Activated CD4-positive, alpha-beta T cell treated with anti-CD3 and anti-CD28 coated beads for 36 hours (primary cell): ENCODE measurements at regions of chr1 and their contacts with region 1.

Region 1: DNA sequence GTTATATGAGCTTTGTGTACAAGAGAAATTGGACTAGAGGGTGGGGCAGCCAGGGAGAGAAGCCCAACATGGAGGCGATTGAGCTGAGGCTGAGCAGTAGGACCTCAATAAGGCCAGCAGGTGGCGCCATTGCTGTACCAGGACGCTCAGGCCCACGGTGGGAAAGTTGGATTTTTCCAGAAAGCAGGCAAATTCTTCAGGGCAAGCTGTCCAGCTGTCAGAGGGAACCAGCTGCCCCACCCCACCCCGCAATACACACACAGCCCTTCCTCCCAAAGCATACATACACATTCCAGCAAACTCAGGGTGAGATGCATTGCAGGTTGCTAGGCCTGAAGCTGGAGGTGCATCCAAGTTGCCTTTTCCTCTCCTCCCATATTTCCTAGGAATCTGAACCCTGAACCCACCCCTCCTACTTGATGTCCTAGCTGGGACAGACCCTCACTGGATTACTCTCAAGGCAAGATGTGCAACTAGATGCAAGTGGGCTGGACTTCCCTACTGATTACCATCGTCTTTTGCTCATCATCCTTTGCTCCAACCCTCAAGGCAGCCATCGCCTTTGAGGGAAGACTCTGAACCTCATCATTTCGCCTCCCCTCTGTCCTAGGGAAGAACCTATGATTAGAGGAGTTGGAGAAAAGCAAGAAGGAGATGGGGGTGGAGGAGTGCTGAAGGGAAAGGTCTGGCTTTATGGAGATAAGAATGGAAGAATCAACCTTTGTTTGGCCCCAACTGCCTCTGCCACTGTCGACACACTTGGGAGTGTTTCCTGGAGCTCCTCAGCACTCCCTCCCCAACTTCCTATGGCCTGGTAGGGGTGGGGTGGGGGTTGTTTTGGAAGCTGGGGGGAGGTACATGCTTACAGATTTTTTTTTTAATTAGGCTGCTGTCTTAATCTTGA is 25.5 kb downstream of the CD34 start:
- DNase-seq: peak; percentile 85
- ATAC-seq: peak; percentile 62
- H3K4me3 Mint-ChIP-seq: no peak overlapping the region
- H3K27ac Mint-ChIP-seq: peak overlapping the region; percentile 97
- H3K4me1 Mint-ChIP-seq: peaks cover 35% of the 10 kb centered on the region
- H3K27me3 Mint-ChIP-seq: peaks cover 2% of the 10 kb centered on the region

Region 2: DNA sequence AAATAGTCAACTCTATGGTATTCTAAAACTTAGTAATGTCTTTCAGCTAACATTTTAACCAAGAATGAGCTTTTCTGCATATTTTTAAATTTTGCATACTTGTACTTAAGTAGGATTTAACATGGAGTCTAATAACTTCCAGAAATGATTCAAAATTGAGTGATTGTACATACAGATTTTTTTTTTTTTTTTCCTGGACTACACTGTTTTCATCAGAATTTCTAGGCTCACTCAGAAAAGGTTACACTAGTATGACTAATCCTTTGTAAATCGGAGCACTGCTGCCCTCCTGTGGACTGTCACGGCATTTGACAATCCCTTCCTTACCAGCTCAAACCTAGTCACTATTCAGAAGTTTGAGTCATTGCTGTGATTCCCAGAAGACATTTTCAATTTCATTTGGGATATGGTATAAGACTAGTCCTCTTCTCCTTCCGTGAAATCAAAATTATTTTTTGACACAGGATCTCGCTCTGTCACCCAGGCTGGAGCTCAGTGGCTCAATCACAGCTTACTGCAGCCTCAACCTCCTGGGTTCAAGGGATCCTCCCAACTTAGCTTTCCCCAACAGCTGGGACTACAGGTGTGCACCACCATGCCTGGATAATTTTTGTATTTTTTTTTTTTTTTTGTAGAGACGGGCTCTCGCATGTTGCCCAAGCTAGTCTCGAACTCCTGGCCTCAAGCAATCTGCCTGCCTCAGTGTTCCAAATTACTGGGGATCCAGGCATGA is 88.0 kb before region 1 on chr1:
- CTCF ChIA-PET with region 1: interaction called, 21 read pairs
- POLR2A ChIA-PET with region 1: interaction called, 5 read pairs
- intact Hi-C with region 1: no loop called
- DNase-seq: peak; percentile 90
- ATAC-seq: peak; percentile 91
- H3K4me3 Mint-ChIP-seq: no peak overlapping the region
- H3K27ac Mint-ChIP-seq: no peak overlapping the region
- H3K4me1 Mint-ChIP-seq: peaks cover 36% of the 10 kb centered on the region
- H3K27me3 Mint-ChIP-seq: no peaks in the 10 kb centered on the region

Region 3: DNA sequence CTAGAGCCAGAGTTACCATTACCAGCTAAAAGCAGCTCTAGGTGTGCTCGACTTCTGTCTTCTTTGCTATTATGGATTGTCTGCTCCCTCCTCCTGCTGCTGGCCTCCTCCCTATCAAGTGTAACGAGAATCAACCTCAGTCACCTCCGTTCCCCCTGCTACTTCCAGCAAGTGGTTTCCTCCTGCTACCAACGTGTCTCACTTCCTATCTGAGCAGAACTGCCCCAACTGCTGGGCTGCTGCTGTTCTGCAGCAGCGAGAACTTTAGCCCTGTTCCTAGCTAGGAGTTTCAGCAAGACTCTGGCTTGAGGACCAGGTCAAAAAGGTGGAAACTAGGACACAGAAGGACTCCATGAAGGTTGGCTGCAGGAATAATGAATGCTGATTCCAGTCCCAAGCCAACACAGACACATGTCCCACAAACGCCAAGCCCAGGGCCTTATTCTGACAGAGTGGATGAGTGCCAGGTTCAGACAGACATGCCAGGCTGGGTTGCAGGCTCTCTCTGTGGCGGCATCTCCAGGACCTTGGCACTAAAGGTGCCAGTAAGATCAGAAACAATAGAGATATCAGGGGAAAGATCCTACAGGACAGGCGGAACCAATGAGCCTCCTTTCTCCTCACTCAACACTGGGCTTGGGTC is 21.4 kb before region 1 on chr1:
- CTCF ChIA-PET with region 1: interaction called, 179 read pairs
- POLR2A ChIA-PET with region 1: no interaction called
- intact Hi-C with region 1: loop called (anchors 1 to 2 kb)
- DNase-seq: peak; percentile 70
- ATAC-seq: peak; percentile 56
- H3K4me3 Mint-ChIP-seq: peak overlapping the region; percentile 6
- H3K27ac Mint-ChIP-seq: peak overlapping the region; percentile 66
- H3K4me1 Mint-ChIP-seq: peaks cover 64% of the 10 kb centered on the region
- H3K27me3 Mint-ChIP-seq: no peaks in the 10 kb centered on the region

Region 4: GRCh38 chr1:207963427-207964194 is 78.2 kb after region 1 on chr1:
- CTCF ChIA-PET with region 1: interaction called, 92 read pairs
- POLR2A ChIA-PET with region 1: no interaction called
- intact Hi-C with region 1: loop called (anchors 1 kb)
- DNase-seq: peak; percentile 90
- ATAC-seq: peak; percentile 82
- H3K4me3 Mint-ChIP-seq: peak overlapping the region; percentile 75
- H3K27ac Mint-ChIP-seq: peak overlapping the region; percentile 71
- H3K4me1 Mint-ChIP-seq: peaks cover 2% of the 10 kb centered on the region
- H3K27me3 Mint-ChIP-seq: peaks cover 18% of the 10 kb centered on the region

Region 5: GRCh38 chr1:208177656-208178055 is 292.3 kb after region 1 on chr1:
- CTCF ChIA-PET with region 1: no interaction called
- POLR2A ChIA-PET with region 1: no interaction called
- intact Hi-C with region 1: no loop called
- DNase-seq: no peak
- ATAC-seq: no peak
- H3K4me3 Mint-ChIP-seq: no peak overlapping the region
- H3K27ac Mint-ChIP-seq: no peak overlapping the region
- H3K4me1 Mint-ChIP-seq: no peaks in the 10 kb centered on the region
- H3K27me3 Mint-ChIP-seq: no peaks in the 10 kb centered on the region